GM12878 (cell line): ENCODE measurements at regions of chr6 and their contacts with region 1.

Region 1: DNA sequence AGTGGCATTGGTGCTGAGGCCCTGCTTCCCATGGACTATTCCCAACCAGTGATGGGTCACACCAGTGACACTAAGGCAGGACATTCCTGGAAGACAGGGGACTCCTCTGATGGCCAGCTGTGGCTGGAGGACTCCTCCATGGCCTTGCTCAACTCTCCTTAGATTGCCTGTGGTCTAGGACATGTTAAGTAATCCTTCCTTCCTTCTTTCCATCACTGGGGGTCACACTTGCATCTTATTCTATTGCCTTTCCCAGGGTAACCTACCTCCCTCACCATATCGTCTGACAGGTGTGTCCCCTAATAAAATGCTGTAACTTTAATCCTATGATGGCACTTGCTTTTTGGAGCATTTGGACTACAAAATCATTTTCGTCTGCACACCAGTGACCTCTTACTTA is 24.5 kb upstream of the HLA-A start:
- DNase-seq: no peak
- ATAC-seq: no peak
- H3K4me3 ChIP-seq: no peak overlapping the region
- H3K27ac ChIP-seq: no peak overlapping the region
- H3K4me1 ChIP-seq: no peaks in the 10 kb centered on the region
- H3K27me3 ChIP-seq: no peaks in the 10 kb centered on the region; a peak in 1 of 4 replicates
- CTCF ChIP-seq: peak in 1 of 3 experiments; percentile 21; a peak in 1 of 6 replicates
- EP300 ChIP-seq: no peak
- POLR2A ChIP-seq: no peak
- RAD21 ChIP-seq: peak; percentile 38

Region 2: GRCh38 chr6:29763491-29764289 is 154.2 kb before region 1 on chr6:
- CTCF ChIA-PET with region 1: no interaction called
- POLR2A ChIA-PET with region 1: no interaction called
- RAD21 ChIA-PET with region 1: no interaction called
- SMC1A ChIA-PET with region 1: no interaction called
- in situ Hi-C with region 1: no loop called
- intact Hi-C with region 1: no loop called
- DNase-seq: no peak
- ATAC-seq: peak; percentile 86
- H3K4me3 ChIP-seq: no peak overlapping the region
- H3K27ac ChIP-seq: no peak overlapping the region
- H3K4me1 ChIP-seq: peaks cover 8% of the 10 kb centered on the region
- H3K27me3 ChIP-seq: no peaks in the 10 kb centered on the region
- CTCF ChIP-seq: no peak
- EP300 ChIP-seq: no peak
- POLR2A ChIP-seq: no peak
- RAD21 ChIP-seq: no peak

Region 3: DNA sequence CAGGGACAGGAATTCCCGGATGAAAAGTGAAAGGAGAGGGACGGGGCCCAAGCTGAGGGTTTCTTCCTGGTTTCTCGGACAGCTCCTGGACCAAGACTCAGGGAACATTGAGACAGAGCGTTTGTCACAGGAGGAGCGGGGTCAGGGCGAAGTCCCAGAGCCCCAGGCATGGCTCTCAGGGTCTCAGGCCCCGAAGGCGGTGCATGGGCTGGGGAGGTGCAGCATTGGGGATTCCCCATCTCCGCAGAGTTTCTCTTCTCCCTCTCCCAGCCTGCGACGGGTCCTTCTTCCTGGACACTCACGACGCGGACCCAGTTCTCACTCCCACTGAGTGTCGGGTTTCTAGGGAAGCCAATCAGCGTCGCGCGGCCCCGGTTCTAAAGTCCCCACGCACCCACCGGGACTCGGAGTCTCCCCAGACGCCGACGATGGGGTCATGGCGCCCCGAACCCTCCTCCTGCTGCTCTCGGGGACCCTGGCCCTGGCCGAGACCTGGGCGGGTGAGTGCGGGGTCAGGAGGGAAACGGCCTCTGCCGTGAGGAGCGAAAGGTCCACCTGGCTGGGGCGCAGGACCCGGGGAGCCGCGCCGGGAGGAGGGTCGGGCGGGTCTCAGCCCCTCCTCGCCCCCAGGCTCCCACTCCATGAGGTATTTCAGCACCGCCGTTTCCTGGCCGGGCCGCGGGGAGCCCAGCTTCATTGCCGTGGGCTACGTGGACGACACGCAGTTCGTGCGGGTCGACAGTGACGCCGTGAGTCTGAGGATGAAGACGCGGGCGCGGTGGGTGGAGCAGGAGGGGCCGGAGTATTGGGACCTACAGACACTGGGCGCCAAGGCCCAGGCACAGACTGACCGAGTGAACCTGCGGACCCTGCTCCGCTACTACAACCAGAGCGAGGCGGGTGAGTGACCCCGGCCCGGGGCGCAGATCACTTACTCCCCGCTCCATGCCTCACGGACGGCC is 88.6 kb after region 1 on chr6:
- CTCF ChIA-PET with region 1: no interaction called
- POLR2A ChIA-PET with region 1: no interaction called
- RAD21 ChIA-PET with region 1: no interaction called
- SMC1A ChIA-PET with region 1: no interaction called
- in situ Hi-C with region 1: loop called (anchors 5 kb)
- intact Hi-C with region 1: no loop called
- DNase-seq: no peak
- ATAC-seq: no peak
- H3K4me3 ChIP-seq: peak overlapping the region; percentile 27; the same call in 1 of the 2 replicates
- H3K27ac ChIP-seq: no peak overlapping the region
- H3K4me1 ChIP-seq: no peaks in the 10 kb centered on the region
- H3K27me3 ChIP-seq: peaks cover 2 to 10% of the 10 kb centered on the region in 2 experiments; a peak in 3 of 4 replicates
- CTCF ChIP-seq: no peak
- EP300 ChIP-seq: no peak
- POLR2A ChIP-seq: no peak; the same call in 1 of the 2 replicates
- RAD21 ChIP-seq: no peak